ENCODE measurements at regions of chr19 and their contacts with region 1.

Region 1: DNA sequence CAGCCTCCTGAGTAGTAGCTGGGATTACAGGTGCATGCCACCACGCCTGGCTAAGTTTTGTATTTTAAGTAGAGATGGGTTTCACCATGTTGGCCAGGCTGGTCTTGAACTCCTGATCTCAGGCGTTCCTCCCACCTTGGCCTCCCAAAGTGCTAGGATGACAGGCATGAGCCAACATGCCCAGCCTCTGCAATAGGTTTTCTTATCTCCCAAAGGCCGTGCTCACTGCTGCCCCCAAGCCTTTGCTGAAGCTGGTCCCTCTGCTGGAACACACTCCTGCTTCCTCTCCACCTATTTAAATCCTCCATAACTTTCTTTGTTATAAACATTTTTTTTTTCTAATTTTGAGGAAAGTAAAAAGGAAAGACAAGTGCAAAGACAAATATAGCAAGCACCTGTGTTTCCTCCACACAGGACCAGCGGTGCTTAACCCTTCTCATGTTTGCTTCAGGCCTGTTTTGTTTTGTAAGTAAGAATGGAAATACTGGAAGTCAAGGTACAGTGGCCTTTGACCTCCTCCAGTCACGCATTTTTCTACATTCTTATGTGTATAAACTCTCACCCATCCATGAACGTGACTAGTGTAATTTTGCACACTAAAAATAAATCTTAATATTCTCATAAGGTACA is 14.5 kb upstream of the TNFAIP8L1 start:
- DNase-seq: no peak
- ATAC-seq: no peak
- H3K4me3 ChIP-seq: no peak overlapping the region
- H3K27ac ChIP-seq: no peak overlapping the region
- H3K4me1 ChIP-seq: peaks cover 0 to 8% (median 0%) of the 10 kb centered on the region in 9 donors
- H3K27me3 ChIP-seq: peaks cover 0 to 23% (median 18%) of the 10 kb centered on the region in 7 donors
- CTCF ChIP-seq: peak in 3 of 9 donors; percentile 18 to 30 (median 24)

Region 2: GRCh38 chr19:4425537-4425936 is 199.3 kb before region 1 on chr19:
- intact Hi-C with region 1: loop called in 1 of 10 experiments (anchors 10 kb)
- DNase-seq: no peak
- ATAC-seq: no peak
- H3K4me3 ChIP-seq: no peak overlapping the region
- H3K27ac ChIP-seq: no peak overlapping the region
- H3K4me1 ChIP-seq: peaks cover 0 to 6% (median 0%) of the 10 kb centered on the region in 9 donors
- H3K27me3 ChIP-seq: no peaks in the 10 kb centered on the region
- CTCF ChIP-seq: no peak

Region 3: GRCh38 chr19:4547303-4548237 is 77.3 kb before region 1 on chr19:
- intact Hi-C with region 1: no loop called
- DNase-seq: no peak
- ATAC-seq: peak in 3 of 8 donors; percentile 22 to 31 (median 31)
- H3K4me3 ChIP-seq: no peak overlapping the region
- H3K27ac ChIP-seq: no peak overlapping the region
- H3K4me1 ChIP-seq: peaks cover 0 to 9% (median 0%) of the 10 kb centered on the region in 9 donors
- H3K27me3 ChIP-seq: no peaks in the 10 kb centered on the region
- CTCF ChIP-seq: peak in 5 of 9 donors; percentile 13 to 37 (median 20)

Region 4: GRCh38 chr19:4583961-4584669 is 40.7 kb before region 1 on chr19:
- intact Hi-C with region 1: loop called in 3 of 10 experiments (anchors 2 to 10 kb)
- DNase-seq: no peak
- ATAC-seq: peak; percentile 13 to 65 (median 46)
- H3K4me3 ChIP-seq: peak overlapping the region; percentile 27 to 66 (median 50)
- H3K27ac ChIP-seq: peak overlapping the region in 1 of 10 donors; percentile 17
- H3K4me1 ChIP-seq: peaks cover 6 to 31% (median 18%) of the 10 kb centered on the region in 9 donors
- H3K27me3 ChIP-seq: peaks cover 19 to 73% (median 55%) of the 10 kb centered on the region in 7 donors
- CTCF ChIP-seq: no peak

Region 5: GRCh38 chr19:4589579-4590410 is 35.1 kb before region 1 on chr19:
- intact Hi-C with region 1: loop called in 3 of 10 experiments (anchors 2 to 10 kb)
- DNase-seq: no peak
- ATAC-seq: peak in 7 of 8 donors; percentile 48 to 94 (median 73)
- H3K4me3 ChIP-seq: no peak overlapping the region
- H3K27ac ChIP-seq: no peak overlapping the region
- H3K4me1 ChIP-seq: peaks cover 0 to 4% (median 3%) of the 10 kb centered on the region in 9 donors
- H3K27me3 ChIP-seq: peaks cover 3 to 54% (median 14%) of the 10 kb centered on the region in 7 donors
- CTCF ChIP-seq: peak in 8 of 9 donors; percentile 23 to 56 (median 45)

Measured in heart right ventricle (tissue), 16 donors.